ENCODE measurements at regions of chr10 and their contacts with region 1.

Region 1: GRCh38 chr10:91163269-91163868 is 57.1 kb upstream of the PCGF5 start:
- DNase-seq: peak; percentile 86 to 94 (median 90)
- H3K4me3 ChIP-seq: peak overlapping the region; percentile 63 to 73
- H3K4me3 Mint-ChIP-seq: peak overlapping the region; percentile 91 to 95 (median 93)
- H3K27ac ChIP-seq: peak overlapping the region; percentile 83
- H3K27ac Mint-ChIP-seq: peak overlapping the region; percentile 94 to 99 (median 97)
- H3K4me1 ChIP-seq: peaks cover 47% of the 10 kb centered on the region
- H3K4me1 Mint-ChIP-seq: peaks cover 36 to 65% (median 49%) of the 10 kb centered on the region in 4 donors
- H3K27me3 ChIP-seq: no peaks in the 10 kb centered on the region
- H3K27me3 Mint-ChIP-seq: no peaks in the 10 kb centered on the region

Region 2: GRCh38 chr10:90871766-90872647 is 291.4 kb before region 1 on chr10 and contains the start of gene RPP30:
- CTCF ChIA-PET with region 1: no interaction called
- POLR2A ChIA-PET with region 1: interaction called, 5 read pairs
- intact Hi-C with region 1: loop called (anchors 5 kb)
- DNase-seq: peak; percentile 78 to 81 (median 79)
- H3K4me3 ChIP-seq: peak within 1 kb of the TSS; percentile 80 to 91
- H3K4me3 Mint-ChIP-seq: peak within 1 kb of the TSS; percentile 97 to 100 (median 98)
- H3K27ac ChIP-seq: peak within 1 kb of the TSS; percentile 65
- H3K27ac Mint-ChIP-seq: peak within 1 kb of the TSS; percentile 81 to 96 (median 95)
- H3K4me1 ChIP-seq: peaks cover 30% of the 10 kb centered on the region
- H3K4me1 Mint-ChIP-seq: peaks cover 21 to 41% (median 32%) of the 10 kb centered on the region in 4 donors
- H3K27me3 ChIP-seq: no peaks in the 10 kb centered on the region
- H3K27me3 Mint-ChIP-seq: peaks cover 13 to 18% of the 10 kb centered on the region in 2 donors
- total RNA-seq, gene RPP30: 32.3 to 33.2 TPM

Region 3: DNA sequence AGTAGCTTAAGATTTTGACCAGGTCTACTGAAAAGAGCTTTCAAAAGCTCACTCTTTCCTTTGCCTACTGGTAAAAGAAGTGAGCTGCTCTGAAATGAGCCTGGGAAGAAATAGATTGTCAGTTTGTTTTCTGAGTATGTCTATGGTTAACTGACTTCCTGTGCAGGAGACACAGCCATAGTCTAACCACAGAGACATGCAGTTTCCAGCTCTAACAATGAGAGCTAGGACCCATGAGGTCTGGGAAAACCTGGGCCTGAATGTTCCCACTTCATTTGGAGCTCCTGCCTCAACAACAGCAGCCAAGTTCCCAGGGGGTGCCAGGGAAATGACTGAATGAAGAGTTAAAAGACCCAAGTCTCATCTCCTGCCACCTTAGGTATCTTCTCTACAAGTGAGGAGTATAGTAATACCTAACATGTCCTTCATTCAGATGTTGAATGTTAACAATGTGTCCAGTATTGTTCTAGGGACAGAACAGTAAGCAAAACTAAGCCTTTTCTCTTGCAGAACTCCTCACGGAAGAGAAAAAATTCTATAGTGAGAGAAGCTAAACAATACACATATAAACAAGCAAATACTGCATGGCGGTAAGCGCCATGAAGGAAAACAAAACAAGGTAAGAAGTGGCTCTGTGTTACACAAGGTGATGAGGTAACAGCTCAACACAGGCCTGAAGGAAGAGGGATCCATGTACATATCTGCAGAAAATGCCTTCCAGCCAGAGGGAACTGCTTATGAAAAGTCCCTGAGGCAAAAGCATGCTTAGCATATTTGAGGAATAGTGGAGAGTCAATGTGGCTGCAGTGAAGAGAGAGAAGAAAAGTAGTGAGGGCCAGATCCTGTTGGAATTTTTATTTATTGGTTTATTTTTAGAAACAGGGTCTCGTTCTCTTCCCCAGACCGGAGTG is 216.1 kb before region 1 on chr10:
- CTCF ChIA-PET with region 1: no interaction called
- POLR2A ChIA-PET with region 1: no interaction called
- intact Hi-C with region 1: no loop called
- DNase-seq: no peak
- H3K4me3 ChIP-seq: no peak overlapping the region
- H3K4me3 Mint-ChIP-seq: no peak overlapping the region
- H3K27ac ChIP-seq: no peak overlapping the region
- H3K27ac Mint-ChIP-seq: peak overlapping the region in 1 of 7 donors; percentile 18
- H3K4me1 ChIP-seq: peaks cover 5% of the 10 kb centered on the region
- H3K4me1 Mint-ChIP-seq: peaks cover 5 to 9% (median 6%) of the 10 kb centered on the region in 4 donors
- H3K27me3 ChIP-seq: no peaks in the 10 kb centered on the region
- H3K27me3 Mint-ChIP-seq: no peaks in the 10 kb centered on the region

Region 4: GRCh38 chr10:91150631-91151030 is 12.7 kb before region 1 on chr10:
- CTCF ChIA-PET with region 1: interaction called, 3 read pairs
- POLR2A ChIA-PET with region 1: interaction called, 10 read pairs
- intact Hi-C with region 1: no loop called
- DNase-seq: no peak
- H3K4me3 ChIP-seq: no peak overlapping the region
- H3K4me3 Mint-ChIP-seq: no peak overlapping the region
- H3K27ac ChIP-seq: no peak overlapping the region
- H3K27ac Mint-ChIP-seq: no peak overlapping the region
- H3K4me1 ChIP-seq: no peaks in the 10 kb centered on the region
- H3K4me1 Mint-ChIP-seq: no peaks in the 10 kb centered on the region
- H3K27me3 ChIP-seq: no peaks in the 10 kb centered on the region
- H3K27me3 Mint-ChIP-seq: peaks cover 1 to 5% of the 10 kb centered on the region in 2 donors

Region 5: DNA sequence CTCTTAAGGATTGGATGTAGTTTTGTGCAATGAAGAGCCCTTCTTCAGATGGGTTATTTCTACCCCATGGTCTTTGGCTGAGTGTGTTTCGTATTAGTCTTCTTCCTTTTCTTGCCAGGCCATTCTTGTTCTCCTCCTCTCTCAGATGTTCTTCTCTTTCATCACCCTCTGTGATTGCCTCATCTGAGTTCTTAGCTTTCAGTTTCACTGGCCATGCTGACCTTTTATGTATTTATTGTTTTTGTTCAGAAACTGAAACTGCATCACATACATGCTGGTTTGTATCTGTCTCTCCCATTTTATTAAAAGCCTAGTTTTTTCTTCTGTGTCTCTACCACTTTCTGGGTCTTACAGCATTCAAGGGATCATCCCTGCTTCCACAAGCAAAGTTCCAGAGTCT is 35.4 kb after region 1 on chr10:
- CTCF ChIA-PET with region 1: interaction called, 3 read pairs
- POLR2A ChIA-PET with region 1: interaction called, 54 read pairs
- intact Hi-C with region 1: loop called (anchors 1 kb)
- DNase-seq: peak; percentile 24 to 51 (median 42)
- H3K4me3 ChIP-seq: no peak overlapping the region
- H3K4me3 Mint-ChIP-seq: peak overlapping the region; percentile 21 to 73 (median 53)
- H3K27ac ChIP-seq: peak overlapping the region; percentile 41
- H3K27ac Mint-ChIP-seq: peak overlapping the region; percentile 75 to 96 (median 89)
- H3K4me1 ChIP-seq: peaks cover 87% of the 10 kb centered on the region
- H3K4me1 Mint-ChIP-seq: peaks cover 76 to 90% (median 82%) of the 10 kb centered on the region in 4 donors
- H3K27me3 ChIP-seq: no peaks in the 10 kb centered on the region
- H3K27me3 Mint-ChIP-seq: no peaks in the 10 kb centered on the region

Region 6: GRCh38 chr10:91251430-91252056 is 88.2 kb after region 1 on chr10:
- CTCF ChIA-PET with region 1: interaction called, 20 read pairs
- POLR2A ChIA-PET with region 1: interaction called, 16 read pairs
- intact Hi-C with region 1: loop called (anchors 1 kb)
- DNase-seq: peak; percentile 50 to 69 (median 66)
- H3K4me3 ChIP-seq: no peak overlapping the region
- H3K4me3 Mint-ChIP-seq: no peak overlapping the region
- H3K27ac ChIP-seq: no peak overlapping the region
- H3K27ac Mint-ChIP-seq: peak overlapping the region in 1 of 7 donors; percentile 10
- H3K4me1 ChIP-seq: peaks cover 22% of the 10 kb centered on the region
- H3K4me1 Mint-ChIP-seq: peaks cover 5 to 9% (median 6%) of the 10 kb centered on the region in 4 donors
- H3K27me3 ChIP-seq: no peaks in the 10 kb centered on the region
- H3K27me3 Mint-ChIP-seq: no peaks in the 10 kb centered on the region

Region 7: GRCh38 chr10:91923371-91924211 is 760.2 kb after region 1 on chr10 and contains the start of gene BTAF1:
- CTCF ChIA-PET with region 1: no interaction called
- POLR2A ChIA-PET with region 1: interaction called, 7 read pairs
- intact Hi-C with region 1: loop called (anchors 2 kb)
- DNase-seq: peak; percentile 89 to 93 (median 92)
- H3K4me3 ChIP-seq: peak within 1 kb of the TSS; percentile 79 to 87
- H3K4me3 Mint-ChIP-seq: peak within 1 kb of the TSS; percentile 90 to 99 (median 94)
- H3K27ac ChIP-seq: peak within 1 kb of the TSS; percentile 91
- H3K27ac Mint-ChIP-seq: peak within 1 kb of the TSS; percentile 96 to 100 (median 99)
- H3K4me1 ChIP-seq: peaks cover 50% of the 10 kb centered on the region
- H3K4me1 Mint-ChIP-seq: peaks cover 29 to 50% (median 38%) of the 10 kb centered on the region in 4 donors
- H3K27me3 ChIP-seq: no peaks in the 10 kb centered on the region
- H3K27me3 Mint-ChIP-seq: peaks cover 2% of the 10 kb centered on the region in 2 donors
- total RNA-seq, gene BTAF1: 69.1 to 76.9 TPM

Measured in CD4-positive, alpha-beta memory T cell (primary cell).